ENCODE measurements at regions of chr10 and their contacts with region 1.

Region 1: GRCh38 chr10:59865101-59865500 is 41.3 kb downstream of the CCDC6 start:
- DNase-seq: peak in 1 of 2 donors; percentile 58
- ATAC-seq: peak in 2 of 3 donors; percentile 54 to 67
- H3K4me3 ChIP-seq: no peak overlapping the region
- H3K4me3 Mint-ChIP-seq: no peak overlapping the region
- H3K27ac ChIP-seq: no peak overlapping the region
- H3K27ac Mint-ChIP-seq: peak overlapping the region in 1 of 2 donors; percentile 23
- H3K4me1 ChIP-seq: peaks cover 11% of the 10 kb centered on the region
- H3K4me1 Mint-ChIP-seq: peaks cover 52 to 57% of the 10 kb centered on the region in 2 donors
- H3K27me3 ChIP-seq: no peaks in the 10 kb centered on the region
- H3K27me3 Mint-ChIP-seq: no peaks in the 10 kb centered on the region
- CTCF ChIP-seq: peak; percentile 42

Region 2: GRCh38 chr10:60032723-60033122 is 167.6 kb after region 1 on chr10:
- intact Hi-C with region 1: loop called (anchors 5 kb)
- DNase-seq: peak in 1 of 2 donors; percentile 58
- ATAC-seq: peak; percentile 57 to 82 (median 78)
- H3K4me3 ChIP-seq: no peak overlapping the region
- H3K4me3 Mint-ChIP-seq: no peak overlapping the region
- H3K27ac ChIP-seq: no peak overlapping the region
- H3K27ac Mint-ChIP-seq: no peak overlapping the region
- H3K4me1 ChIP-seq: no peaks in the 10 kb centered on the region
- H3K4me1 Mint-ChIP-seq: no peaks in the 10 kb centered on the region
- H3K27me3 ChIP-seq: no peaks in the 10 kb centered on the region
- H3K27me3 Mint-ChIP-seq: no peaks in the 10 kb centered on the region
- CTCF ChIP-seq: no peak